Left lung (tissue), 14 donors: ENCODE measurements at regions of chr17 and their contacts with region 1.

Region 1: DNA sequence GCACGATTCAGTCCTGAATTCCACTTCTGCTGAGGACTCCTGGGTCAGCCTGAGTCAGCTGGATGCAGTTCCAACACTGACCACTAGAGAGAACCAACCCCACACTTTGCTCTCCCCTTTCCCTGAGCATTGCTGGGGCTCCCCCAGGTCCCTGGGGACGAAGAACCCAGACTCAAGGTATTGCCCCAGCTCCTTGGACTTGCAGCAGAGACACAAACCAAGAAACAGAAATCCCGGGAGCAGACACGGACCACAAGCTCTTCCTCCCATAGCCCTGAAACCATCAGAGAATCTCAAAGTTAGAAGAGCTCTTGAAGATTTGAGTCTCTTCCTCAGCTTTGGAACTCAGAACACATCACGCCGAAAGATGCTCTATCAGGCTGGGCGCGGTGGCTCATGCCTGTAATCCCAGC is 678 bp upstream of the GH1 start:
- DNase-seq: peak; percentile 31 to 55 (median 42)
- ATAC-seq: peak; percentile 96
- H3K4me3 ChIP-seq: no peak overlapping the region
- H3K27ac ChIP-seq: no peak overlapping the region
- H3K4me1 ChIP-seq: no peaks in the 10 kb centered on the region
- H3K27me3 ChIP-seq: no peaks in the 10 kb centered on the region
- CTCF ChIP-seq: peak; percentile 93 to 99

Region 2: DNA sequence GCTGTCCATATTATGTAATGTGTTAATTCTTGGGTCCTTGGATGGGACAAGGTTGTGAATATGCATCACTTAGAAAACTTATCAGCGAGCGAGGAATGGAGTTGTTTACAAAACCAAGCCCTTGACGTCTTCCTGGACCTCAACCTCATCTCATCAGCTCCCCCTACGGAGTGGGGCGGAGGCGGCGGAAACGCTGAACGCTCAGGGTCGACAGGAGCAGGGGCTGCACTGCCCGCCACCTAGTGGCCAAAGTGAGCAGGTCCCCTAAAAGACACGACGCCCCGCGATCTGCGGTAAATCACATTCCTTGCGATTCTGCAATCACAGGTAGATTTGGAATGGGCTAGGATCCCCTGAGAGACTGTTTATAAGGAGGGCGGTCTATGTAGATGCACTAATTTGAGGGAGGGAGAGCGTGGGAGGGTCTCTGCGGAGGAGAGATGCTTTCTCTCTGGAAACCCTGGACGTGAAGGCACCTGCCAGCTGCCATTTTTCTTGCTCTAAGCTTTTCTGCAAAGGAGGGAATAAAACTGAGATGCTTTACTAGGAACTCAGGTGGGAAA is 106.5 kb after region 1 on chr17:
- intact Hi-C with region 1: loop called in 1 of 2 experiments (anchors 5 kb)
- DNase-seq: peak in 3 of 4 donors; percentile 82 to 93 (median 85)
- ATAC-seq: peak; percentile 83
- H3K4me3 ChIP-seq: no peak overlapping the region
- H3K27ac ChIP-seq: peak overlapping the region in 1 of 2 donors; percentile 38
- H3K4me1 ChIP-seq: peaks cover 9 to 31% of the 10 kb centered on the region in 2 donors
- H3K27me3 ChIP-seq: no peaks in the 10 kb centered on the region
- CTCF ChIP-seq: peak; percentile 92 to 97

Region 3: DNA sequence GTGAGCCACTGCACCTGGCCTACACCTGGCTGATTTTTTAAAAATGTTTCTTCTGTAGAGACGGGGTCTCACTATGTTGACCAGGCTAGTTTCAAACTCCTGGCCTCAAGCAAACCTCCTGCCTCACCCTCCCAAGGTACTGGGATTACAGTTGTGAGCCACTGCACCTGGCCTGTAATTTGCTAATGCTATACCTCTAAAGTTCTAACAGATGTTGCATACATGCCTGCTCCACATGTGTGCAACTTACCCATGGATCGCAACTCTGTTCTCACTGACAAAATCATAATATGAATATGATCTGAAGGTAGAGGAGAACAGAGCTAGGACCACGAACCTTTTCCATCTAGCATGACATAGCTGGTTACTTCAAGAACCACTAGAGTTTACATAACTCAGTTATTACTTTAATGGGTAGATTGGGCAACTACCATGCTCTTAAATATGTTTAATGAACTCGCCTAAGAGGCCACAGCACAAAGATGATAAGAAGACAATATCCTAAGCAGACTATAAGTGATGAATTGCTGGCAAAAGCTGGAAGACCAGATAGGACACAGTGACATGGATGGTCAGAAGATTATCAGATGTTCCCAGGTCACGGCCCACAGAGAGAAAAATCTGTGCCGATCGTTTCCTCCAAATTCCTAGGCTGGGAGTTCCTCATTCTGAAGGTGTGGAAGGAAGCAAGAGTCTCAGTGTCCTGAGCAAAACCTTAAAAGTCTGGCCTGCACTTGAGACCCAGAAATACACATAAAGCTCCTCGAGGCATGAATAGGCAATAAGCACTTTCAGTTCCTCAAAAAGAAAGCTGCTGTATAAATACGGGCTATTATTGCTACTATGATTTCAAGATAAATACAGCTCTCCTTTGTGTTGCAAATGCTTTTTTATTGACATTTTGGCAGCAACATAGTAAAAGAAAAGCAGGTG is 154.7 kb after region 1 on chr17:
- intact Hi-C with region 1: no loop called
- DNase-seq: peak in 1 of 4 donors; percentile 44
- ATAC-seq: peak; percentile 61
- H3K4me3 ChIP-seq: no peak overlapping the region
- H3K27ac ChIP-seq: peak overlapping the region; percentile 74 to 81
- H3K4me1 ChIP-seq: peaks cover 24 to 49% of the 10 kb centered on the region in 2 donors
- H3K27me3 ChIP-seq: no peaks in the 10 kb centered on the region
- CTCF ChIP-seq: no peak